Heart right ventricle (tissue), 16 donors: ENCODE measurements at regions of chr1 and their contacts with region 1.

Region 1: GRCh38 chr1:17439250-17440073 is at the start of gene RCC2:
- DNase-seq: peak; percentile 67 to 80
- ATAC-seq: peak; percentile 50 to 86 (median 70)
- H3K4me3 ChIP-seq: peak within 1 kb of the TSS; percentile 51 to 92 (median 79)
- H3K27ac ChIP-seq: peak within 1 kb of the TSS; percentile 77 to 94 (median 82)
- H3K4me1 ChIP-seq: peaks cover 0 to 28% (median 21%) of the 10 kb centered on the region in 9 donors
- H3K27me3 ChIP-seq: no peaks in the 10 kb centered on the region
- CTCF ChIP-seq: peak in 1 of 9 donors; percentile 16
- total RNA-seq, gene RCC2: 9.0 to 25.3 (median 11.4) TPM

Region 2: GRCh38 chr1:17475729-17476128 is 36.3 kb after region 1 on chr1:
- intact Hi-C with region 1: loop called in 2 of 10 experiments (anchors 1 to 5 kb)
- DNase-seq: peak in 1 of 2 donors; percentile 9
- ATAC-seq: peak in 6 of 8 donors; percentile 70 to 98 (median 93)
- H3K4me3 ChIP-seq: no peak overlapping the region
- H3K27ac ChIP-seq: no peak overlapping the region
- H3K4me1 ChIP-seq: peaks cover 0 to 4% (median 0%) of the 10 kb centered on the region in 9 donors
- H3K27me3 ChIP-seq: peaks cover 0 to 3% (median 0%) of the 10 kb centered on the region in 7 donors
- CTCF ChIP-seq: no peak

Region 3: DNA sequence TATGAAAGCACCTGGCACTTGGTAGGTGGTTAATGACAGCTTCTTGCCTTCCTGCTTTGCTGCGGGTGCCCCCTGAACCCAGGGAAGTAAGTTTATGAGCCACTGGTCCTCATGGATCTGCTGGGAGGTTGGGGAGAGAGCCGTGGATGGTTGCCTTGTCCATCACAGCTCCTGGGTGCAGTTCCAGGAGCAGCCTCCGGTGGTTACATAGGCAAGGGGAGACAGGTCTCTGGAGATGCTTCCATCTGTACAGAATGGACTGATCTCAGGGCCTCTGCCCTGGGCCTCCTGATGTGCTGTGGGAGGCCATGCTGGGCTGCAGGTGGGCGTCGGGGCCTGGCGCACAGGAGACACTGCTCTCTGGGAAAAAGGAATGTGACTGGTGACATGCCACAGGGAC is 68.5 kb after region 1 on chr1:
- intact Hi-C with region 1: no loop called
- DNase-seq: no peak
- ATAC-seq: peak in 1 of 8 donors; percentile 41
- H3K4me3 ChIP-seq: no peak overlapping the region
- H3K27ac ChIP-seq: no peak overlapping the region
- H3K4me1 ChIP-seq: peaks cover 0 to 3% (median 1%) of the 10 kb centered on the region in 9 donors
- H3K27me3 ChIP-seq: no peaks in the 10 kb centered on the region
- CTCF ChIP-seq: peak in 1 of 9 donors; percentile 23

Region 4: GRCh38 chr1:17630048-17630830 is 190.8 kb after region 1 on chr1:
- intact Hi-C with region 1: loop called in 1 of 10 experiments (anchors 10 kb)
- DNase-seq: peak; percentile 61 to 68
- ATAC-seq: peak; percentile 36 to 82 (median 76)
- H3K4me3 ChIP-seq: no peak overlapping the region
- H3K27ac ChIP-seq: peak overlapping the region in 9 of 10 donors; percentile 39 to 90 (median 58)
- H3K4me1 ChIP-seq: peaks cover 0 to 69% (median 16%) of the 10 kb centered on the region in 9 donors
- H3K27me3 ChIP-seq: no peaks in the 10 kb centered on the region
- CTCF ChIP-seq: no peak